ENCODE measurements at regions of chr17 and their contacts with region 1.

Region 1: DNA sequence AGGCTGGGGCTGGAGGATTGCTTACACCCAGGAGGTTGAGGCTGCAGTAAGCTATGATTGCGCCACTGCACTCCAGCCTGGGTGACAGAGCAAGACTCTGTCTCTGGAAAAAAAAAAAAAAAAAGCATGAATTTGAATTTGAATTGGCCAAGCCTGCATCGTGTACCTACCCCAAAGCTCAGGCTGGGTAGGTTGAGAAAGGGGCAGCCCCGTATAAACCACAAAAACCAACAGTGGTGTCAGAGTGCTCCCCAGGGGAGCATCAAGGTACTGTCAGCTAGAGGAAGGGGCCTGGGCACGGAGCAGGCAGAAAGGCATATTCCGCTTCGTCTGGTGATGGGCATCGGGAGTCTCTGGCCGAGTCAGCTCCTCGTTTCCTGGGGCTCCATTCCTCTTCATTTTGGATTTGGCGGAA is 40.9 kb downstream of the RAP1GAP2 start:
- DNase-seq: peak; percentile 44
- ATAC-seq: no peak
- H3K4me3 Mint-ChIP-seq: no peak overlapping the region
- H3K27ac Mint-ChIP-seq: no peak overlapping the region
- H3K4me1 Mint-ChIP-seq: peaks cover 4% of the 10 kb centered on the region
- H3K27me3 Mint-ChIP-seq: peaks cover 10% of the 10 kb centered on the region

Region 2: GRCh38 chr17:2786176-2786881 is 50.8 kb before region 1 on chr17:
- CTCF ChIA-PET with region 1: interaction called, 18 read pairs
- POLR2A ChIA-PET with region 1: no interaction called
- DNase-seq: peak; percentile 91
- ATAC-seq: peak; percentile 98
- H3K4me3 Mint-ChIP-seq: no peak overlapping the region
- H3K27ac Mint-ChIP-seq: no peak overlapping the region
- H3K4me1 Mint-ChIP-seq: peaks cover 20% of the 10 kb centered on the region
- H3K27me3 Mint-ChIP-seq: peaks cover 27% of the 10 kb centered on the region

Region 3: DNA sequence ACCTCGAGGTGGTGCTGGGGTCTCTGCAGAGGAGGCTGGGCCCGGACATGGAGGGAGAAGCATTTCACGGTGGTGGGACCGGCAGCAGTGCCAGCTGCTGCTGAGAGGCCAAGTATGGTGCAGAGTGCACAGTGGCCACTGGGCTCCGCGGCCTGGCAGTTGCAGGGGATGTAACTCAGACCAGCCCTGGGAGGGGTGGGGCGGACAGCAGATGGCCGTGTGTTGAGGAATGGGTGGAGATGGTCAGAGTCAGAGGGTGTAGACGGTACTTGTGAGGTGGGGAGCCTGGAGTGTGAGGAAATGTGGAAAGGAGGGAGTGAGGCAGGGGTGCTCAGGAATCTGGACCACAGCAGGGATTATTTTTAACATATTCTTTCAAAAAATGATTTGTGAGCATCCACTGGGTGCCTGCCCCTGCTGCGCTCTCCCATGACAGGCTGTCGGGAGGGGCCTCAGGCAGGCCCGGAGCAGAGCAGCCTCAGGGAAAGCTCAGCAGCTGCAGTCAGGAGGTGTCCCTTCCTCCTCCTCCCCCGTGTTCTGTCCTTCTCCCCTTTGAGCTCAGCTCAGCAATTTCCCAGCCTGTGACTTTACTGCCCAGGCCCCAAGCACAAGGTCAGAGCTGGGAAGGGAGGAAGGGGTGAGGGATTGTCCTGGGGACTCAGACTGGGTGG is 72.2 kb after region 1 on chr17:
- CTCF ChIA-PET with region 1: no interaction called
- POLR2A ChIA-PET with region 1: no interaction called
- DNase-seq: no peak
- ATAC-seq: no peak
- H3K4me3 Mint-ChIP-seq: no peak overlapping the region
- H3K27ac Mint-ChIP-seq: no peak overlapping the region
- H3K4me1 Mint-ChIP-seq: no peaks in the 10 kb centered on the region
- H3K27me3 Mint-ChIP-seq: peaks cover 2% of the 10 kb centered on the region

Region 4: GRCh38 chr17:2921443-2921842 is 84.3 kb after region 1 on chr17:
- CTCF ChIA-PET with region 1: no interaction called
- POLR2A ChIA-PET with region 1: no interaction called
- DNase-seq: no peak
- ATAC-seq: no peak
- H3K4me3 Mint-ChIP-seq: no peak overlapping the region
- H3K27ac Mint-ChIP-seq: no peak overlapping the region
- H3K4me1 Mint-ChIP-seq: no peaks in the 10 kb centered on the region
- H3K27me3 Mint-ChIP-seq: no peaks in the 10 kb centered on the region